PC-3 (cell line): ENCODE measurements at regions of chr15 and their contacts with region 1.

Region 1: GRCh38 chr15:75801859-75802593 is 41.2 kb upstream of the UBE2Q2 start:
- DNase-seq: peak; percentile 80
- ATAC-seq: peak; percentile 99
- H3K4me3 ChIP-seq: peak overlapping the region; percentile 50
- H3K27ac ChIP-seq: no peak overlapping the region
- H3K4me1 ChIP-seq: no peaks in the 10 kb centered on the region
- H3K27me3 ChIP-seq: peaks cover 14% of the 10 kb centered on the region; the same call in 1 of the 2 replicates
- CTCF ChIP-seq: peak; percentile 70

Region 2: DNA sequence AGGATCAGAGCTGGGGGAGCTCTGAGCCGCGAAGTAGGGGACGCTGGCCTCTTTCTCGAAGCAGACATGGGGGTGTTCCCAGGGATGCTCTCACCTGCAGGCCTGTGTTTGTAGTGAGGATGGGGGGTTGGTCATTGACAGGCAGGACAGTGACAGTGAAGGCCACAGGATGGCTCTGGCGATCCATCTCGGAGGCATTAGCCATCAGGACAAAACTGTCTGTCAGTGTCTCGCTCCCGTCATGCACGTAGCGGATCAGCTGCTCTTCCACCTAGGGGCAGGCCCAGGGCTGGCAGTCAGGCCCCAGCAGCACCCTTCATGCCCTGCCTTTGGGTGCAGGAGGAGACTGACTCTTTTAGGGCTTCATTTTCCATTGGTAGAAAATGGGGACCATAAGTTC is 117.4 kb before region 1 on chr15:
- CTCF ChIA-PET with region 1: interaction called, 6 read pairs
- POLR2A ChIA-PET with region 1: no interaction called
- intact Hi-C with region 1: loop called (anchors 2 kb)
- DNase-seq: no peak
- ATAC-seq: no peak
- H3K4me3 ChIP-seq: no peak overlapping the region
- H3K27ac ChIP-seq: no peak overlapping the region
- H3K4me1 ChIP-seq: no peaks in the 10 kb centered on the region
- H3K27me3 ChIP-seq: no peaks in the 10 kb centered on the region
- CTCF ChIP-seq: no peak

Region 3: GRCh38 chr15:75723847-75724660 is 78.0 kb before region 1 on chr15:
- CTCF ChIA-PET with region 1: no interaction called
- POLR2A ChIA-PET with region 1: no interaction called
- intact Hi-C with region 1: loop called (anchors 1 kb)
- DNase-seq: peak; percentile 27
- ATAC-seq: peak; percentile 53; the same call in 1 of the 2 replicates
- H3K4me3 ChIP-seq: no peak overlapping the region
- H3K27ac ChIP-seq: no peak overlapping the region
- H3K4me1 ChIP-seq: peaks cover 8% of the 10 kb centered on the region; the same call in 1 of the 2 replicates
- H3K27me3 ChIP-seq: no peaks in the 10 kb centered on the region
- CTCF ChIP-seq: no peak